ENCODE measurements at regions of chrX and their contacts with region 1.

Region 1: DNA sequence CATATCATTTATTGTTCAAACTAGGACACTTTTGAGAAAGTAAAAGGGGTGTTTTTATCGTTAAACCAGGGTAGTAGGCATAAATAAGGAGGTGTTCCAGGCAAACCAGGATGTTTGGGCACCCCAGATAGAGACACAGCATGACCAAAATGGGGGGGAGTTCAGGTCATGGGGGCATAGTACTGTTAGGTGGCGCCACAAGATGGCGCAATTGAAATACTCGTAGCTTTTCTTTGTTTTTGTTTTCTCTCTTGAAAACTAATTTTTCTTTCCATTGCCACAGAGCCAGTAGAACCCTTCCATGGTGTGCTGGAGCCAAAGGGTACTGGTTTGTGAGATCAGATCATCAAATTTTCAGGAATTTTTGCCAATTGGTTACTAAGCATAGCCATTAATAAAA is 283.4 kb downstream of the BCOR start:
- DNase-seq: peak; percentile 52
- H3K4me3 Mint-ChIP-seq: no peak overlapping the region
- H3K27ac Mint-ChIP-seq: no peak overlapping the region
- H3K4me1 Mint-ChIP-seq: peaks cover 31% of the 10 kb centered on the region
- H3K27me3 Mint-ChIP-seq: no peaks in the 10 kb centered on the region

Region 2: DNA sequence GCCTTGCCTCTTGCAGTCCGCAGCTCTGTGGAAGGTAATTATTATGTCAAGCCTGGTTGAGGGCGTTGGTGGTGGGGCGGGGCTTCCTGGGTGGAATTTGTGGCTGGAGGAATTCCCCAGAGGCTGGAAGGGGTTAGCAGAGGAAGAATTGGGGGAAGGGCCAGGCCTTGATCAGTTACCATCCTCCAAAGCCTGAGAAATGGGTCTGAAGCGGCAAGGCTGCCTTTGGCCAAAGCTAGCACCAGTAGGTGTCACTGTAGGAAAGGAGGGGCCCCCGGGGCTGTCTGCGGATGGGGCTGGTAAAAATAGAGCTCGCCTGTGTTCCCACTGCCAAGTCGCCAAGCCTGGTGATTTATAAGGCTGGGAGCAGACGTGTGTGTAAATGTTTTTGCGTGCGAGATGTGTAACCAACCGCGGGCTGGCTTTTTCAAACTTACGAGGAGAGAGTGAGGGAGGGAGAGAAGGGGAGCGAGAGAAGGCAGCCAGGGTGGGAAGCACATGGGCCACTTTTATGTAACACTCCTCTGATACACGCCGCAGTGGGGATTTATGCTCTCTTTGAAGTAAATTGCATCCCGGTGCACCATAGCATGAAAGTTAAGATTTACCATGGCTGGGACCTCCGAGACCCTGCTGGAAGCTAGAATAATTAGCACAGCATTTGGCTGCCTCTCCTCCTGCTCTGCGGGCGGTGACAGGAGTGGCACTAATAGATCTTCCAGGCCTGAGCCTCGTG is 83.6 kb before region 1 on chrX:
- CTCF ChIA-PET with region 1: interaction called, 7 read pairs
- POLR2A ChIA-PET with region 1: no interaction called
- intact Hi-C with region 1: loop called (anchors 5 kb)
- DNase-seq: peak; percentile 72
- H3K4me3 Mint-ChIP-seq: no peak overlapping the region
- H3K27ac Mint-ChIP-seq: peak overlapping the region; percentile 59
- H3K4me1 Mint-ChIP-seq: peaks cover 12% of the 10 kb centered on the region
- H3K27me3 Mint-ChIP-seq: no peaks in the 10 kb centered on the region

Region 3: DNA sequence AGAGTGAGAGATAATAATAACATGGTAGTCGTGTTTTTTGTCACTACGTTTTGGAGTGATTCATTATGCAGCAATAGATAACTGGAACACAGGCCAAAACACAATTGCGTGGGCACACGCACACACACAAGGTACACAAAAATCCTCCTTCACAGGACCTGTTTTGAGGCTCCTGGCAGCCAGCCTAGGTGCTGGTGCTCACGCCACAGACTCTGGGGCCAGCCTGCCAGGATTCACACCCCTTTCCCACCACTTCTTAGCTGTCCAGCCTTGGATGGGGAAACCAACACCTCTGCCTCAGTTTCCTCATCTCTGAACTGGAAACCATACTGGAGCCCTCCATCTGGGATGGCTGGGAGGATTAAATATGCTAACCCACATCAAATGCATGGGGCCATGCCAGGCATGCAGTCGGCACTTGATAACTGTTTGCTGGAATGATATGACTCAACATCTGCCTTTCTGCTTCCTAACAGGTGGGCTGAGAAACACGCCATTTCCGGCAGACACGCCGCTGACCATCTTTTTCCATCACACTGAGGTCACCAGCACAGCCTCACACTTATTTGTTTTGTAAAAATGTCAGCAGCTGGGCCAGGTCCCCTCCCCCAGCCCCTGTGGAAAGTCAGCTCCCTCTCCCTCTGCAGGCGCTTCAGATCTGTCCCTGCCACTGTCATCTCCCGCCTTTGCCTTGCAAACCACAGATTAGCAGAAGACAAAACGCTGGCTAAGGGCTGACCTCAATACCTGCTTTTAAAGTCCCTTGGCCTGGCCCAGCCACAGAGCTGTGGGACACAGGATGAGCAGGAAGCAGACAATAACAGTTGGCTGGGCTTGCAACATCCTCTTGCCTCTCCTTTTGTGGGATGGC is 45.8 kb after region 1 on chrX:
- CTCF ChIA-PET with region 1: no interaction called
- POLR2A ChIA-PET with region 1: interaction called, 12 read pairs
- intact Hi-C with region 1: loop called (anchors 1 kb)
- DNase-seq: peak; percentile 94
- H3K4me3 Mint-ChIP-seq: peak overlapping the region; percentile 29
- H3K27ac Mint-ChIP-seq: peak overlapping the region; percentile 98
- H3K4me1 Mint-ChIP-seq: peaks cover 55% of the 10 kb centered on the region
- H3K27me3 Mint-ChIP-seq: no peaks in the 10 kb centered on the region

Region 4: GRCh38 chrX:39883666-39884065 is 69.3 kb after region 1 on chrX:
- CTCF ChIA-PET with region 1: no interaction called
- POLR2A ChIA-PET with region 1: no interaction called
- intact Hi-C with region 1: loop called (anchors 2 kb)
- DNase-seq: peak; percentile 72
- H3K4me3 Mint-ChIP-seq: no peak overlapping the region
- H3K27ac Mint-ChIP-seq: peak overlapping the region; percentile 71
- H3K4me1 Mint-ChIP-seq: peaks cover 21% of the 10 kb centered on the region
- H3K27me3 Mint-ChIP-seq: peaks cover under 1% of the 10 kb centered on the region

Region 5: DNA sequence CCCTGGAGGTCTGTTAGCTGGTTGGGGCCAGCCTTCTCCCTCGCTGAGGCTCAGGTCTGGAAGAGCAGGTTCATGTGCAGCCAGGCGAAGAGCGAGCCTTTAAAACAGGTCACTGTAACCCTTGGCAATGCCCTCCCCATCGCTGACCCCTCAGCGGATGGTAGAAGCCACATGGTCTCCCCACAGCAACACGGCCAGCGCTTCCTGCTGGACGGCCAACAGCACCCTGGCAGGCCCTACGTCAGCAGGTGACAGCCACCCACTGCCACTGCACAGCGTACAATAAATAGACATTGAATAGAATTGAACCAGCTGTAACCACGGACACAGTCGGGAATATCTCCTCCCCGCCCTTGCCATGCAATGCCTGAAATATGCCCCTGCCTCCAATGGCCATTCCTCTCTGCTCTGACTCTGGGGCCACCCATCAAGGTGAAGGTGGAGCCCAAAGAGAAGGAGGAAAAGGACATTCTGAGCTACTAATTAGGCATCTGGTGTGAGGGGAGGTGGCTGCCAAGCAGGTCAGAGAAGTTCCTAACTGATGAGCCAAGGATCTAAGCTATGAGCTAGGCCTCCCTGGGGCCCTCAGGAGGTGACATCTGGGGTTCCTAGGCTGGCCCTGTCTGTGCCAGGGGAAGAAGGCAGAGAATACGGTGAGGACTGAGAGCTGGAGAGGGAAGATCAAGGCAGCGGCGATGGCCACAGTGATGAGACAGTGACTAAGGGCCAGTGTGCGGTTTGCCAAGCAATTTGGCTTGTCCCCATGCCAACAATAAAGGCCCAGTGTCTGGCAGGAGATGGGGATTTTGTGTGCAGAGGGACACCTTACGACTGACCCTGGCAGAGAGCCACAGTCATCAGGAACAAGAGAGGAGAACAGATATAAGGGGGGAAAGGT is 81.1 kb after region 1 on chrX:
- CTCF ChIA-PET with region 1: no interaction called
- POLR2A ChIA-PET with region 1: no interaction called
- intact Hi-C with region 1: no loop called
- DNase-seq: no peak
- H3K4me3 Mint-ChIP-seq: no peak overlapping the region
- H3K27ac Mint-ChIP-seq: no peak overlapping the region
- H3K4me1 Mint-ChIP-seq: peaks cover 9% of the 10 kb centered on the region
- H3K27me3 Mint-ChIP-seq: no peaks in the 10 kb centered on the region

Region 6: GRCh38 chrX:40097497-40098263 is 283.3 kb after region 1 on chrX and contains the start of gene BCOR:
- CTCF ChIA-PET with region 1: interaction called, 3 read pairs
- POLR2A ChIA-PET with region 1: no interaction called
- intact Hi-C with region 1: loop called (anchors 10 kb)
- DNase-seq: peak; percentile 82
- H3K4me3 Mint-ChIP-seq: peak within 1 kb of the TSS; percentile 81
- H3K27ac Mint-ChIP-seq: peak within 1 kb of the TSS; percentile 86
- H3K4me1 Mint-ChIP-seq: peaks cover 22% of the 10 kb centered on the region
- H3K27me3 Mint-ChIP-seq: no peaks in the 10 kb centered on the region
- total RNA-seq, gene BCOR: 33.7 to 35.0 TPM

Region 7: GRCh38 chrX:40266490-40267333 is 452.3 kb after region 1 on chrX:
- CTCF ChIA-PET with region 1: interaction called, 3 read pairs
- POLR2A ChIA-PET with region 1: no interaction called
- intact Hi-C with region 1: loop called (anchors 1 kb)
- DNase-seq: peak; percentile 70
- H3K4me3 Mint-ChIP-seq: peak overlapping the region; percentile 70
- H3K27ac Mint-ChIP-seq: no peak overlapping the region
- H3K4me1 Mint-ChIP-seq: no peaks in the 10 kb centered on the region
- H3K27me3 Mint-ChIP-seq: no peaks in the 10 kb centered on the region

Region 8: GRCh38 chrX:40933132-40933705 is 1118.8 kb after region 1 on chrX:
- CTCF ChIA-PET with region 1: no interaction called
- POLR2A ChIA-PET with region 1: no interaction called
- intact Hi-C with region 1: no loop called
- DNase-seq: peak; percentile 32
- H3K4me3 Mint-ChIP-seq: peak overlapping the region; percentile 44
- H3K27ac Mint-ChIP-seq: peak overlapping the region; percentile 69
- H3K4me1 Mint-ChIP-seq: peaks cover 23% of the 10 kb centered on the region
- H3K27me3 Mint-ChIP-seq: no peaks in the 10 kb centered on the region

Measured in activated CD4-positive, alpha-beta memory T cell treated with anti-CD3 and anti-CD28 coated beads for 36 hours (primary cell).